MCF 10A (cell line): ENCODE measurements at regions of chr2 and their contacts with region 1.

Region 1: GRCh38 chr2:211745295-211746097 is 793.1 kb downstream of the ERBB4 start:
- DNase-seq: peak; percentile 69
- H3K4me3 Mint-ChIP-seq: no peak overlapping the region
- H3K27ac Mint-ChIP-seq: no peak overlapping the region
- H3K4me1 Mint-ChIP-seq: no peaks in the 10 kb centered on the region
- H3K27me3 Mint-ChIP-seq: peaks cover 47% of the 10 kb centered on the region
- CTCF ChIP-seq: peak; percentile 79

Region 2: DNA sequence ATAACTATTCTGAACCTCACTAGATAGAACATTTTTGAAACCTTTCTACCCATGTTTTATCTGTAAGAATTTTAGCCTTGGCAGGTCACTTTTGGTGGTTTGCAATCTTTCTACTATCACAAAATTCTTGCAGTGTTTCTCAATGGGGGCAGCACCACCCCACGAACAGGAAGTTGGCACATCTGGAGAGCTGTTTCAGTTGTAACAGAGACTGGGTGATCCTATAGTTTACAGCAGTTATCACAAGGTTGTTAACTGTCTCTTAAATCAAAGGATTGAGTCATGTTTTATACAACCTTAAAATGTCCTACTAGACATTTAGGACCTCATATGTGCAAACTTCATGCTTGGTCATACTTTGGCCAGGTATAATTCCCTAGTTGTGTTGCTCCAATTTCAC is 36.1 kb before region 1 on chr2:
- CTCF ChIA-PET with region 1: no interaction called
- POLR2A ChIA-PET with region 1: no interaction called
- intact Hi-C with region 1: no loop called
- DNase-seq: no peak
- H3K4me3 Mint-ChIP-seq: no peak overlapping the region
- H3K27ac Mint-ChIP-seq: no peak overlapping the region
- H3K4me1 Mint-ChIP-seq: no peaks in the 10 kb centered on the region
- H3K27me3 Mint-ChIP-seq: peaks cover 37% of the 10 kb centered on the region
- CTCF ChIP-seq: no peak

Region 3: GRCh38 chr2:211722928-211723327 is 22.6 kb before region 1 on chr2:
- CTCF ChIA-PET with region 1: interaction called, 17 read pairs
- POLR2A ChIA-PET with region 1: no interaction called
- intact Hi-C with region 1: no loop called
- DNase-seq: no peak
- H3K4me3 Mint-ChIP-seq: no peak overlapping the region
- H3K27ac Mint-ChIP-seq: no peak overlapping the region
- H3K4me1 Mint-ChIP-seq: no peaks in the 10 kb centered on the region
- H3K27me3 Mint-ChIP-seq: peaks cover 26% of the 10 kb centered on the region
- CTCF ChIP-seq: no peak

Region 4: DNA sequence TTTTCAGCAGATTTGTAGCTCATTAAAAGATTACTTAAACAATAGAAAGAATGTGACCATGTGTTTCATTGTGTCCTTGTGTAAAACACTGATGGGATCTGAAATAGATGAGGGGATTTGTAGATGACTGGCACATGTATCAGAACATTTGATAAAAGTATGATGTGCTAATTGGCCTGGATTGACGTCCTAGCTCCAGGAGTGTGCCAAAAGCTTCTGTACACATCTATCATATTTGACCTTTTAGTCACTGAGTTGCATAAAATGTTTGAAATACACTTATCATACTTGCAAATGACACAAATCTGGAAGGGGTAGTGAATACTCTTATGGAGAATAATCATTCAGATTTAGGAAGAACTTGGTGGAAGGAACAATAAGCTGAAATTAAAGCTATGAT is 14.6 kb after region 1 on chr2:
- CTCF ChIA-PET with region 1: interaction called, 13 read pairs
- POLR2A ChIA-PET with region 1: no interaction called
- intact Hi-C with region 1: no loop called
- DNase-seq: no peak
- H3K4me3 Mint-ChIP-seq: no peak overlapping the region
- H3K27ac Mint-ChIP-seq: no peak overlapping the region
- H3K4me1 Mint-ChIP-seq: no peaks in the 10 kb centered on the region
- H3K27me3 Mint-ChIP-seq: peaks cover 65% of the 10 kb centered on the region
- CTCF ChIP-seq: no peak

Region 5: DNA sequence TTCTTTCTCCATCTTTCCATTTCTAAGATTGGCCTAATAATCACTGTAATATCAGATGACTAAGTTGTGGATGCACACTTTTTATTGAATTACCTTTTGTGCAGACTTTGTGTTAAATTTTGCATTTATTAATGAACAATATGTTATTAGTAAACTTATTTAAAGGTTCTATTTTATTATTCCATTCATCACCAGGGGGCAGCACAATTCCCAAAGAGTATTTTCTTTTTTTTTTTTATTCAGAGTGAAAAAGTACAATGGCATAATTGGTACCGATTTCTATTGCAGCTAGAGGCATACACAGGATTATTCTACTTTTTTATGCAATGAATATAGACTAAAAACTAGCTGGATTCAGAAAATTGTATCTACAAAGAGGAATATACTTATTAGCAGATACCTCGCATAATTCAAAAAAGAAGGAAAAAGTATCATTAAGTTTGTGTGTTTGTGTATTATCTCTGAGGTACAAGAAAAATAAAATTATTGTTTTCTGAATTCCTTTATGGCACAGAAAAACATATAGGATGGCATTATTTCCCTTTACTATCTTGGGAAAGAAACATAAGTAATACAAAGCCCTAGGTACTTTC is 402.5 kb after region 1 on chr2:
- CTCF ChIA-PET with region 1: interaction called, 6 read pairs
- POLR2A ChIA-PET with region 1: no interaction called
- intact Hi-C with region 1: loop called (anchors 10 kb)
- DNase-seq: peak; percentile 39
- H3K4me3 Mint-ChIP-seq: no peak overlapping the region
- H3K27ac Mint-ChIP-seq: no peak overlapping the region
- H3K4me1 Mint-ChIP-seq: no peaks in the 10 kb centered on the region
- H3K27me3 Mint-ChIP-seq: peaks cover 36% of the 10 kb centered on the region
- CTCF ChIP-seq: peak; percentile 36

Region 6: DNA sequence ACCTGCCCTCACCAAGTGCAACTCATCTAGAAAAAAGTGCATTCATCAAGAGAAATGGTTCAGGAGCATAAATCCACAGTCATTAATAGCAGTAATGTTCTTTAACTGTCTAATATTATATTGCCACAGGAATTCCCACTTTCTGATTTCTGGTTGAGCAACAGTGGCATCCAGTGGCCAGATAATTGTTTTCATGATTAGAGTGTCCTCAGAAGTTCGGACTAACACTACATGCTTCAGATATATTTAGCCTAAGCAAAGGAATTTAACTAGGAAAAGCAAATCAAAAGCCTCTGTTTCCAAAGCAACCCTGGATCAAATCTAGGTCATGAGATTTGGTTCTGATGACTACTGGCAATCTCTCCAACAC is 802.9 kb after region 1 on chr2:
- CTCF ChIA-PET with region 1: interaction called, 12 read pairs
- POLR2A ChIA-PET with region 1: no interaction called
- intact Hi-C with region 1: loop called (anchors 1 kb)
- DNase-seq: peak; percentile 38
- H3K4me3 Mint-ChIP-seq: no peak overlapping the region
- H3K27ac Mint-ChIP-seq: no peak overlapping the region
- H3K4me1 Mint-ChIP-seq: no peaks in the 10 kb centered on the region
- H3K27me3 Mint-ChIP-seq: peaks cover 55% of the 10 kb centered on the region
- CTCF ChIP-seq: peak; percentile 32